ENCODE measurements at regions of chr12 and their contacts with region 1.

Region 1: GRCh38 chr12:12081836-12082497 is 11.2 kb downstream of the BCL2L14 start:
- DNase-seq: peak; percentile 81
- H3K4me3 ChIP-seq: no peak overlapping the region
- H3K27ac ChIP-seq: peak overlapping the region; percentile 21
- H3K4me1 ChIP-seq: no peaks in the 10 kb centered on the region
- H3K27me3 ChIP-seq: no peaks in the 10 kb centered on the region
- CTCF ChIP-seq: no peak

Region 2: DNA sequence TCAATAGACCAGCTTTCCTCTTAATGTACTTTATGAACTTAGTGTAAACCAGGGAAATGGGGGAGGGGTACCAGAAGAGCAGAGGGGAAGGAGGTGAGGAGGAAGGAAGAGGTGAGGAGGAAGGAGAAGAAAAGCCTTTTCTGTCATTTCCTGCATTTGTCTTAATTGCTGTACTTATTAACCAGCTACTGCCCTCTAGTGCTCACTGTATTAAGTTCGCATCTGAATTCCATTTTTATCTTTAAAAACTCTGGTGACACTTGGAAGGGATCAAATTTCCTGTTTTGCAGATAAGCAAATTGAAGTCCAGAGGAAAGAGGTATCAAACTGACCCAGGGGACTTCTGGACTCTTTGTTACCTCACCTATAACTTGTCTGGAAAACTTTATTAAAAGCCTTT is 245.8 kb after region 1 on chr12:
- intact Hi-C with region 1: loop called (anchors 5 kb)
- DNase-seq: no peak
- H3K4me3 ChIP-seq: no peak overlapping the region
- H3K27ac ChIP-seq: no peak overlapping the region
- H3K4me1 ChIP-seq: peaks cover 4% of the 10 kb centered on the region
- H3K27me3 ChIP-seq: no peaks in the 10 kb centered on the region
- CTCF ChIP-seq: peak; percentile 53

Region 3: DNA sequence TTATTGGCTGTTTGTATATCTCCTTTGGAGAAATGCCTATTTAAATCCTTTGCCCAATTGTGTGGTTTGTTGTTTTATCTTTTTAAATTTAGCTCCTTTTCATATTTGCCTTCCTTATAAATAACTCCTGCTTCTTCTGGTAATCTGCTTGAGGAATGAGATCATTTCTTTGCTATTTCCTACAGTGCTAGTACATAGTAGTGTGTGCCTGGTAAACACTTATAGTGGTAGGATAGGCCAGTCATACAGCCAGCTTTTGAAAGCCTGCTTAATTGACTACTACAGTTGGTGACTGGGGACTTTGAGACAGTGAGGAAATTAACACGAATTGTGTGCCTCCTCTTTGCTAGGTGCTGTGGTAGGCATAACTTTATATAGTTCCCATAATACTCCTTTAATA is 343.6 kb after region 1 on chr12:
- intact Hi-C with region 1: no loop called
- DNase-seq: no peak
- H3K4me3 ChIP-seq: no peak overlapping the region
- H3K27ac ChIP-seq: no peak overlapping the region
- H3K4me1 ChIP-seq: peaks cover 6% of the 10 kb centered on the region
- H3K27me3 ChIP-seq: no peaks in the 10 kb centered on the region
- CTCF ChIP-seq: no peak

Measured in colonic mucosa (tissue), 4 donors.